GM12878 (cell line): ENCODE measurements at regions of chr3 and their contacts with region 1.

Region 1: DNA sequence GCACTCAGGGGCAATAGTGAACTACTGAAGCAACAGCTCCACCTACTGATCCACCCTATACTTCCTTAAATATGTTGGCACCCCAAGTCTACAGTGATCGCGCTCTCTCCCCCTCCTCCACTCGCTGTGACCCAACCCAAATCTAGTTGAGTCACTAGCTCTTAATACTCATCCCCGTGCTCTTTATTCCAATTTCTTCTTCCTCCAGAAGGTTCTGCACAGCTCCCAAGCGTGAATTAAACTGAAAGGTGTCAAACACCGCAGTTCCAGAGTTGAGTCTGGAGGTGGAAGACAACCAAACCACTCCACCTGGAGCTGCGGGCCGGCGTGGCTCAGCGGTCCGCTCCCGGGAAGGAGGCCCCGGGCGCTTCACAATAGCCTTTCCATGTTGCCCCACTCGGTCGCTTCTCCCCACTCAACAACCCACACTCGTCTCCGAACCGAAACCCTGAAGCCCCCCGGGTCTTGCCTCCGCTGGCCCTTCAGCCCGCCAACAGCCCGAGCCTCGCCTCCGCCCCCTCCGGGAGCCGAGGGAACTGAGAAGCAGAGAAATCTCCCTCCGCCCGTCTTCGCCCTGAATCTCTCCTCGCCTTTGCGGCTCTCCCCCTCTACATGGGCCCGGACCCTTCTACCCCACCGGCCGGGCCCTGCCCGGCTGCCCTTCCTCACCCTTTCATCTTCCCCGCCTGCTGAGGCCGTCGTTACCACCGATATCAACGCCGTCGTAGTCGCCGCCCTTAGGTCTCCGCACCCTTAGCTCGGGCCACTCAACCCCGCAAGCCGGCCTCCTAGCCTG is 578 bp downstream of the NAA50 start:
- DNase-seq: peak; percentile 72
- ATAC-seq: peak; percentile 75
- H3K4me3 ChIP-seq: peak overlapping the region; percentile 70
- H3K27ac ChIP-seq: peak overlapping the region; percentile 95
- H3K4me1 ChIP-seq: 0 out of 2 replicates have a peak, but pooled peaks cover 3% of the 10 kb centered on the region
- H3K27me3 ChIP-seq: no peaks in the 10 kb centered on the region
- CTCF ChIP-seq: peak; percentile 72 to 87 (median 73); a peak in 5 of 6 replicates
- EP300 ChIP-seq: no peak
- POLR2A ChIP-seq: 0 out of 2 replicates have a peak, but pooled peaks have one; percentile 24
- RAD21 ChIP-seq: peak; percentile 70

Region 2: GRCh38 chr3:113531826-113532697 is 213.4 kb before region 1 on chr3 and contains the start of gene SIDT1:
- CTCF ChIA-PET with region 1: interaction called, 11 read pairs
- POLR2A ChIA-PET with region 1: no interaction called
- RAD21 ChIA-PET with region 1: interaction called, 5 read pairs
- SMC1A ChIA-PET with region 1: interaction called, 6 read pairs
- in situ Hi-C with region 1: no loop called
- intact Hi-C with region 1: no loop called
- DNase-seq: peak; percentile 71
- ATAC-seq: peak; percentile 71
- H3K4me3 ChIP-seq: peak within 1 kb of the TSS; percentile 97
- H3K27ac ChIP-seq: peak within 1 kb of the TSS; percentile 98
- H3K4me1 ChIP-seq: peaks cover 6% of the 10 kb centered on the region
- H3K27me3 ChIP-seq: no peaks in the 10 kb centered on the region
- CTCF ChIP-seq: peak in 1 of 3 experiments; percentile 25; a peak in 2 of 6 replicates
- EP300 ChIP-seq: 0 out of 4 replicates have a peak, but pooled peaks of 1 of the 2 experiments have one; percentile 26
- POLR2A ChIP-seq: peak; percentile 74
- RAD21 ChIP-seq: no peak
- polyA plus RNA-seq, gene SIDT1: 3.0 to 3.2 TPM

Region 3: GRCh38 chr3:113712129-113712528 is 33.3 kb before region 1 on chr3:
- CTCF ChIA-PET with region 1: interaction called, 6 read pairs
- POLR2A ChIA-PET with region 1: interaction called, 13 read pairs
- RAD21 ChIA-PET with region 1: interaction called, 4 read pairs
- SMC1A ChIA-PET with region 1: interaction called, 3 read pairs
- in situ Hi-C with region 1: no loop called
- intact Hi-C with region 1: no loop called
- DNase-seq: no peak
- ATAC-seq: peak; percentile 47
- H3K4me3 ChIP-seq: no peak overlapping the region
- H3K27ac ChIP-seq: no peak overlapping the region
- H3K4me1 ChIP-seq: no peaks in the 10 kb centered on the region
- H3K27me3 ChIP-seq: no peaks in the 10 kb centered on the region
- CTCF ChIP-seq: no peak
- EP300 ChIP-seq: no peak
- POLR2A ChIP-seq: no peak
- RAD21 ChIP-seq: no peak

Region 4: GRCh38 chr3:113802795-113803455 is 57.5 kb after region 1 on chr3:
- CTCF ChIA-PET with region 1: interaction called, 5 read pairs
- POLR2A ChIA-PET with region 1: interaction called, 3 read pairs
- RAD21 ChIA-PET with region 1: interaction called, 17 read pairs
- SMC1A ChIA-PET with region 1: interaction called, 7 read pairs
- in situ Hi-C with region 1: no loop called
- intact Hi-C with region 1: no loop called
- DNase-seq: no peak
- ATAC-seq: peak; percentile 85
- H3K4me3 ChIP-seq: no peak overlapping the region
- H3K27ac ChIP-seq: no peak overlapping the region
- H3K4me1 ChIP-seq: peaks cover 9% of the 10 kb centered on the region
- H3K27me3 ChIP-seq: no peaks in the 10 kb centered on the region
- CTCF ChIP-seq: no peak
- EP300 ChIP-seq: no peak
- POLR2A ChIP-seq: no peak
- RAD21 ChIP-seq: no peak

Region 5: GRCh38 chr3:113838631-113839209 is 93.2 kb after region 1 on chr3 and contains the start of gene GRAMD1C:
- CTCF ChIA-PET with region 1: interaction called, 34 read pairs
- POLR2A ChIA-PET with region 1: interaction called, 12 read pairs
- RAD21 ChIA-PET with region 1: interaction called, 9 read pairs
- SMC1A ChIA-PET with region 1: interaction called, 5 read pairs
- in situ Hi-C with region 1: no loop called
- intact Hi-C with region 1: loop called (anchors 2 kb)
- DNase-seq: peak; percentile 59
- ATAC-seq: peak; percentile 98
- H3K4me3 ChIP-seq: peak within 1 kb of the TSS; percentile 54
- H3K27ac ChIP-seq: no peak within 1 kb of the TSS
- H3K4me1 ChIP-seq: peaks cover 3% of the 10 kb centered on the region; the same call in 1 of the 2 replicates
- H3K27me3 ChIP-seq: no peaks in the 10 kb centered on the region
- CTCF ChIP-seq: peak; percentile 86 to 89 (median 88)
- EP300 ChIP-seq: no peak
- POLR2A ChIP-seq: peak; percentile 40; the same call in 1 of the 2 replicates
- RAD21 ChIP-seq: peak; percentile 75
- polyA plus RNA-seq, gene GRAMD1C: 3.2 to 8.4 TPM

Region 6: GRCh38 chr3:113867506-113867905 is 122.0 kb after region 1 on chr3:
- CTCF ChIA-PET with region 1: no interaction called
- POLR2A ChIA-PET with region 1: no interaction called
- RAD21 ChIA-PET with region 1: no interaction called
- SMC1A ChIA-PET with region 1: no interaction called
- in situ Hi-C with region 1: no loop called
- intact Hi-C with region 1: no loop called
- DNase-seq: no peak
- ATAC-seq: no peak
- H3K4me3 ChIP-seq: no peak overlapping the region
- H3K27ac ChIP-seq: no peak overlapping the region
- H3K4me1 ChIP-seq: no peaks in the 10 kb centered on the region
- H3K27me3 ChIP-seq: no peaks in the 10 kb centered on the region
- CTCF ChIP-seq: no peak
- EP300 ChIP-seq: no peak
- POLR2A ChIP-seq: no peak
- RAD21 ChIP-seq: no peak

Region 7: GRCh38 chr3:114034787-114035545 is 289.5 kb after region 1 on chr3:
- CTCF ChIA-PET with region 1: no interaction called
- POLR2A ChIA-PET with region 1: no interaction called
- RAD21 ChIA-PET with region 1: no interaction called
- SMC1A ChIA-PET with region 1: no interaction called
- in situ Hi-C with region 1: no loop called
- intact Hi-C with region 1: no loop called
- DNase-seq: no peak
- ATAC-seq: no peak
- H3K4me3 ChIP-seq: no peak overlapping the region
- H3K27ac ChIP-seq: no peak overlapping the region
- H3K4me1 ChIP-seq: no peaks in the 10 kb centered on the region
- H3K27me3 ChIP-seq: no peaks in the 10 kb centered on the region
- CTCF ChIP-seq: no peak
- EP300 ChIP-seq: no peak
- POLR2A ChIP-seq: no peak
- RAD21 ChIP-seq: no peak

Region 8: DNA sequence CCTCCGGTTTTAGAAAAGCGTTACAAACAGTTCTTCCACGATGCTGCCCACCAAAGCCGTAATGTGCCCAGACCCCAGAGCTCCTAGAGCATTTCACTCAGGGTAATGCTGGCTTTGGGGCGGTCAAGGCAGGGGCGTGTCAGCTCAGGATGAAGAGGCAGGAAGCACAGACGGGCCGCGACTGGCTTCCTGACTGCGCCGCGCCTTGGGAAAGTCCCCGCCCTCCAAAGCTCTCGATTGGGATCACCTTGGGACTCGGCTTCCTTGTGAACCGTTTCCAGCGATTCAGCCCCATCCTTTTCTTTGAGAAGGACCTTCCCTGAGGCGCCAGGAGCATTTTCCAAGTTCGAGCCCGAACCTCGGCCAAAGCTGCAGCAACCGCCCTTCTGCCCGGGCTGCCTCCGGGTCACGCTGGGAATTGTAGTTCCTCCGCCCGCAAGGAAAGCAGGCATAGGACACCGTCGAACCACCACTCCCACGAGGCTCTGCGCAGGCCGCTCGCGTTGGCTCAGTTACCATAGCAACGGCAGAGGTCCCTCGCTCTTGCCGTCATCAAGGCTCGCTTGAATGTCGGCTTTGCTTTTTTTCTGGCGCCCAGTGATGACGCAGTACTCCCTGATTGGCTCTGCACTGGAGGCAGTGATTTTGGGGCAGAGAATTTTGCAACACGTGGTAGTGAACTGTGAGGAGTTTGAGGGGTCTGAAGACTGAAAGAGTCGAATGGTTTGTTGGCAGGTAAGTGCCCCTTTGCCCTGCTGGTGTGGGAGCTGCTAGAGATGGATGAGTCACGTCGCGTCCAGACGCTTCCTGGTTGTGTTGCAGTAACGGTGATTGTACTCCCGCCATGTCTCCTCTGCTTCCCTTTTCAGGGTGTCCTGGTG is 310.9 kb after region 1 on chr3 and contains the starts of genes CCDC191 and QTRT2:
- CTCF ChIA-PET with region 1: interaction called, 4 read pairs
- POLR2A ChIA-PET with region 1: no interaction called
- RAD21 ChIA-PET with region 1: no interaction called
- SMC1A ChIA-PET with region 1: no interaction called
- in situ Hi-C with region 1: loop called (anchors 5 kb)
- intact Hi-C with region 1: loop called (anchors 1 kb)
- DNase-seq: peak; percentile 97
- ATAC-seq: peak; percentile 98
- H3K4me3 ChIP-seq: peak within 1 kb of the TSS; percentile 92
- H3K27ac ChIP-seq: peak within 1 kb of the TSS; percentile 72
- H3K4me1 ChIP-seq: 0 out of 2 replicates have a peak, but pooled peaks cover 2% of the 10 kb centered on the region
- H3K27me3 ChIP-seq: no peaks in the 10 kb centered on the region
- CTCF ChIP-seq: no peak
- EP300 ChIP-seq: peak in 1 of 2 experiments; percentile 77; a peak in 1 of 4 replicates
- POLR2A ChIP-seq: peak; percentile 54
- RAD21 ChIP-seq: no peak
- polyA plus RNA-seq, gene CCDC191: 1.3 to 1.6 TPM
- polyA plus RNA-seq, gene QTRT2: 17.8 to 33.5 TPM

Region 9: GRCh38 chr3:114380233-114380651 is 634.8 kb after region 1 on chr3:
- CTCF ChIA-PET with region 1: no interaction called
- POLR2A ChIA-PET with region 1: no interaction called
- RAD21 ChIA-PET with region 1: no interaction called
- SMC1A ChIA-PET with region 1: no interaction called
- in situ Hi-C with region 1: no loop called
- intact Hi-C with region 1: no loop called
- DNase-seq: no peak
- ATAC-seq: no peak
- H3K4me3 ChIP-seq: no peak overlapping the region
- H3K27ac ChIP-seq: no peak overlapping the region
- H3K4me1 ChIP-seq: 0 out of 2 replicates have a peak, but pooled peaks cover 3% of the 10 kb centered on the region
- H3K27me3 ChIP-seq: no peaks in the 10 kb centered on the region
- CTCF ChIP-seq: no peak
- EP300 ChIP-seq: no peak
- POLR2A ChIP-seq: no peak
- RAD21 ChIP-seq: no peak